Transverse colon (tissue), 4 donors: ENCODE measurements at regions of chr3 and their contacts with region 1.

Region 1: GRCh38 chr3:185976977-185977678 is 39.3 kb upstream of the TRA2B start:
- DNase-seq: peak; percentile 81
- H3K4me3 ChIP-seq: no peak overlapping the region
- H3K27ac ChIP-seq: no peak overlapping the region
- H3K4me1 ChIP-seq: no peaks in the 10 kb centered on the region
- H3K27me3 ChIP-seq: no peaks in the 10 kb centered on the region
- CTCF ChIP-seq: peak; percentile 72 to 85 (median 84)
- EP300 ChIP-seq: no peak
- POLR2A ChIP-seq: no peak

Region 2: DNA sequence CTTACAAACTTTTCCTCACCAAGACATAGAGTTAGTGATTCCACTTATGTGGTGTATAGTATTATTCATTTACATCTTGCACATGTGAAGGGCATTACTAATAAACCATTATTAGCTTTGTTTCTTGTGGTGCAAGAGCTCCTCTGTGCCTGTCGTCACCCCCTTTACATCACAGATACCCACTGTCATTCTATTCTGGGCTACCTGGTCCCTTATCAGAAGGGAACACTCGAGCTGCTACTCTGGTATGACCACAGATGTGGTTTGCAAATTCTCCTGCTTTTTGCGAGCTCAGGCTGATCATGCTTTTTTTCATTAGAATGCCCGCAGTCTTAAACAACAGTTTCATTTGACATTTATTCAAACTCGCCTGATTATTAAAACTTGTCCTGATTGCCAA is 404.9 kb before region 1 on chr3:
- in situ Hi-C with region 1: no loop called
- intact Hi-C with region 1: no loop called
- DNase-seq: no peak
- H3K4me3 ChIP-seq: no peak overlapping the region
- H3K27ac ChIP-seq: no peak overlapping the region
- H3K4me1 ChIP-seq: peaks cover 0 to 8% (median 4%) of the 10 kb centered on the region in 4 donors
- H3K27me3 ChIP-seq: no peaks in the 10 kb centered on the region
- CTCF ChIP-seq: no peak
- EP300 ChIP-seq: no peak
- POLR2A ChIP-seq: no peak

Region 3: DNA sequence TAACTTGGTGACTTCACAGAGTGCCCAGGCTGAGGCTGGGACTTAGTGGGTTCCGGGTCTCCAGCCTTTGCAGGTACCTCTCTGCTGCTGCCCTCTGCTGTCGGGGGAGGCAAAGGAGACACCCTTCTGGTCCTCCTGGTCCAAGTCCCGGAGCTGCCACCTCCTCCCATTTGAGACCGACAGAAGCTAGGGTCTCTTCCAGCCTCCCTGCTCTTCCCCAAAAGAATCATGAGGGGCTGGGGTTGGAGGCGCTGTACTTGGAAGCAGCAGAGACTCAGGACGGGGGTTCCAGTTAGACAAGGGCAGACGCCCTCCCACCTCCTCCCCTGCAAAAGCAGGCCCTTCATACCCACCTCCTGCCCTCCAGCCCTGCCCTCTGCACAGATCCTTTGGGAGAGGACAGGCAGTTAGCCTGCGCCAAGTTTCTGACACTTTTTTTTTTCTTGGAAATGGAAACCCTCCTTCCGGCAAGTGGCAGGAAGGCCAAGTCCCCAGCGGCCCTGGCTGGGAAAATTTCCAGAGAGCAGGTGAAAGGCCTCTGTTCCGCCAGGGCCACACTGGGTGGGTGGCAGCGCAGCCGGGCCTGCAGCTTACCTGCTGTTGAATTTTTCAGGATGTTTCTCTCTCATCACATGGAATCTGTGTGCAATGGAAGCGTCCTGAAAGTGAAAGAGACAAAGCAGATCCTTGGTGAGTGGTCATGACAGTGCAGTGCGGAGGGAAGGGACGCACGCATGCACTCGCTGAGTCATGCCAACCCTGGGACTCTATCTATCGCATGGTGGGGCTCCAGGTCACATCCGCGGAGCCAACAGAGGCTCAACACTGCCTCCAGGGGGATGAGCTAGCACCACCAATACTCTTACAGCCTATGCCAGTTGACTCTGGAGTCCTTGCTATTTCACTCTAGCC is 265.0 kb after region 1 on chr3:
- in situ Hi-C with region 1: loop called in 2 of 4 experiments (anchors 10 to 25 kb)
- intact Hi-C with region 1: no loop called
- DNase-seq: peak; percentile 70
- H3K4me3 ChIP-seq: peak overlapping the region in 1 of 4 donors; percentile 30
- H3K27ac ChIP-seq: peak overlapping the region in 1 of 4 donors; percentile 8
- H3K4me1 ChIP-seq: peaks cover 0 to 10% (median 0%) of the 10 kb centered on the region in 4 donors
- H3K27me3 ChIP-seq: no peaks in the 10 kb centered on the region
- CTCF ChIP-seq: peak; percentile 19 to 41 (median 33)
- EP300 ChIP-seq: no peak
- POLR2A ChIP-seq: no peak

Region 4: GRCh38 chr3:186259612-186260383 is 282.7 kb after region 1 on chr3:
- in situ Hi-C with region 1: loop called in 2 of 4 experiments (anchors 10 to 25 kb)
- intact Hi-C with region 1: no loop called
- DNase-seq: peak; percentile 77
- H3K4me3 ChIP-seq: no peak overlapping the region
- H3K27ac ChIP-seq: no peak overlapping the region
- H3K4me1 ChIP-seq: peaks cover 0 to 6% (median 0%) of the 10 kb centered on the region in 4 donors
- H3K27me3 ChIP-seq: no peaks in the 10 kb centered on the region
- CTCF ChIP-seq: peak; percentile 74 to 90 (median 81)
- EP300 ChIP-seq: no peak
- POLR2A ChIP-seq: no peak

Region 5: DNA sequence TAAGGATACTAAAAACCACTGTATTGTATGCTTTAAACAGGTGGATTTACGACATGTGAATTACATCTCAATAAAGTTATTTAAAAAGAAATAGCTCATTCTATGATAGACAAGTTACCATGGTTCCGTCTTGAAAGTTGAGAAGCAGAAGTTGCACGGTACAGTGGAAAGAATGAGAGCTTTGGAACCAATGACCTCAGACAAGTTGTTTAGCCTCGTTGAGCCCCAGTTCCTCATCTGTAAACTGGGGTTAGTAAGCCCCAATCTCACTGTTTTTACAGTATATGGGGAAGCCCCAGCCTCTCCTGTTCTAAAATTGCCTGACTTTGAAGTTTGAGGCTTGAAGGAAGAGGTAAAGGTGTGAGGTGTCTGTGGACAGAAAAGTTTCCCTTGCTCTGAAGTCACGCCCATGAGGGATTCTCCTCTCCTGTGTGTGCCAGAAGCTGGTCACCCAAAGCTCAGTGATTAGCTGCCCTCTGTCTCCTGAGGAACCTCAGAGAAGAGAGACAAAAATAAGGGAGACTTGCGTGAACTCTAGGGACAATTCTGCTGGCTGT is 557.1 kb after region 1 on chr3:
- in situ Hi-C with region 1: loop called (anchors 10 to 25 kb)
- intact Hi-C with region 1: no loop called
- DNase-seq: no peak
- H3K4me3 ChIP-seq: no peak overlapping the region
- H3K27ac ChIP-seq: no peak overlapping the region
- H3K4me1 ChIP-seq: peaks cover 0 to 7% (median 0%) of the 10 kb centered on the region in 4 donors
- H3K27me3 ChIP-seq: no peaks in the 10 kb centered on the region
- CTCF ChIP-seq: no peak
- EP300 ChIP-seq: no peak
- POLR2A ChIP-seq: no peak

Region 6: GRCh38 chr3:186540221-186540834 is 563.2 kb after region 1 on chr3:
- in situ Hi-C with region 1: loop called (anchors 10 to 25 kb)
- intact Hi-C with region 1: loop called (anchors 10 kb)
- DNase-seq: peak; percentile 78
- H3K4me3 ChIP-seq: no peak overlapping the region
- H3K27ac ChIP-seq: no peak overlapping the region
- H3K4me1 ChIP-seq: peaks cover 0 to 5% (median 2%) of the 10 kb centered on the region in 4 donors
- H3K27me3 ChIP-seq: no peaks in the 10 kb centered on the region
- CTCF ChIP-seq: peak; percentile 72 to 87 (median 79)
- EP300 ChIP-seq: no peak
- POLR2A ChIP-seq: no peak

Region 7: DNA sequence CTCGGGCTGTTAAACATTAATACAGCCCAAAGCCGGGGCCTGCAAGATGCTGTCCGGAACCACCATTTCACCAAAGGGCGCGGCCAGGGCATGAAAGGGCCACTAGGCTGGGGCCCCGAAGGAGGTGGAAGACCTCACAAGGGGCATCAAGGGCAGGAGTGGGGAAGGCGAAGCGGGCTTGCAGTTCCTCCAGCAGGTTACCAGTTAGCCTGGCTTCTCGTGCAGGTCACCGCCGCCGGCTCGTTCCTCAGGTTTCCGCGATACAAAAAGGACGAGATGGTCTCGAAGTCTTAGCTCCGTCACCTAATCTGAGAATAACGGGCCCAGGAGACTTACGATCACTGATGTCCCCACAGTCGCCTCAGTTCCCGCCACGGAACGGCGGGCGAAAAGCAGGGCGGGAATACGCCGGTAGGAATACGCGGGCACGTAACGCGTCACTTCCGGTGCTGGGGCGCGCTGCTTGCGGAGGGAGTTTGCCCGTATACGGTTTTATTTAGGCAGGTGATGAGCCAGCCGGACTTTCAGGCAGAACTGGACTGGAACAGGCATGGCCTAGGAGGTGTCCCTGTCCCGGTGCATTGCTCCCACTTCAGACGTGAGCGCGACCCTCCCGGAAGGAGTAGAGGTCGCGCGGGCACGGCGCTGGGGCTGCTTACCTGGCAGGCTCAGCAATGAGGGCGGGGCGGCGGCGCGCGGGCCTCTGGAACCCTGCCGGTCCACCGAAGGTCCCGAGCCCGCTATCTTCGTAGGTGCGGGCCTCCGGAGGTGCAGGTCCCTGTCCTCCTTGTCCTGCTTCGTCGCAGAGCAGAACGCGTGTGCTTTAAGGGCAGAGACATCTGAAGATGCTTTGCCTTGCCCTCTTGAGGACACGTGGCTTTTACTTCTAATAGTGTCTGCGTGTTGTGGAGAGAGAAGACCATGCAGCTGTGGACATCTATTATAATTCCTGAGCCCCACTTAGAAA is 829.2 kb after region 1 on chr3 and contains the start of gene RFC4:
- in situ Hi-C with region 1: loop called in 1 of 4 experiments (anchors 25 kb)
- intact Hi-C with region 1: no loop called
- DNase-seq: peak; percentile 91
- H3K4me3 ChIP-seq: peak within 1 kb of the TSS; percentile 46 to 86 (median 59)
- H3K27ac ChIP-seq: peak within 1 kb of the TSS; percentile 83 to 92 (median 90)
- H3K4me1 ChIP-seq: peaks cover 6 to 20% (median 12%) of the 10 kb centered on the region in 4 donors
- H3K27me3 ChIP-seq: no peaks in the 10 kb centered on the region
- CTCF ChIP-seq: no peak
- EP300 ChIP-seq: peak; percentile 4
- POLR2A ChIP-seq: peak; percentile 57
- total RNA-seq, gene RFC4: 7.2 to 226 (median 10.5) TPM in 3 of 4 donors, not detected in the other